Activated naive CD4-positive, alpha-beta T cell treated with anti-CD3 and anti-CD28 coated beads for 36 hours (primary cell): ENCODE measurements at regions of chr13 and their contacts with region 1.

Region 1: GRCh38 chr13:41916173-41916954 is 44.5 kb downstream of the VWA8 start:
- DNase-seq: no peak
- H3K4me3 Mint-ChIP-seq: peak overlapping the region; percentile 59
- H3K27ac Mint-ChIP-seq: peak overlapping the region; percentile 95
- H3K4me1 Mint-ChIP-seq: peaks cover 60% of the 10 kb centered on the region
- H3K27me3 Mint-ChIP-seq: no peaks in the 10 kb centered on the region

Region 2: DNA sequence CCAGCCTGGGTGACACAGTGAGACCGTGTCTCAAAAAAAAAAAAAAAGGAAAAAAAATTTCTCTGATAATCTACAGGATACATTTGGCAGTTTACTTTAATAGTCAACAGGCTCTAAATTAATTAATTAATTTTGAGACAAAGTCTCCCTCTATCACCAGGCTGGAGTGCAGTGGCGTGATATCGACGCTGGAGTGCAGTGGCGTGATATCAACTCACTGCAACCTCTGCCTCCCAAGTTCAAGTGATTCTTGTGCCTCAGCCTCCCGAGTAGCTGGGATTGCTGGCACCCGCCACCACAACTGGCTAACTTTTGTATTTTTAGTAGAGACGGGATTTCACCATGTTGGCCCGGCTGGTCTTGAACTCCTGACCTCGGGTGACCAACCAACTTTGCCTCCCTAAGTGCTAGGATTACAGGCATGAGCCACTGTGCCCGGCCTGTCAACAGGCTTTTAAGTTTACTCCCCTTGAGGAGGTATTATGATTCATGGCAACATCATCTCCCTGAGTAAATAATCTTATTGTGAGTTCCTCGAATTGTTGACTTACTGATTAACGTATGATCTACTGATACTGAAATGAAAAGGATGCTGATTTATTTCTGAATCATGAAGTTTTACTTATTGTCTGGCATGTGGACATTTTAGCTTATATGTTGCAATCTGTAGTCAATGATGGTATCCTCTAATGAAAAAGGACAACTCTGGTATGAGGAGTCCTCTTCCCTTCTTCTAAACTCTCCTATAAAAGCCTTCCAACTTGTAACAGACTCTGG is 631.7 kb before region 1 on chr13:
- CTCF ChIA-PET with region 1: no interaction called
- intact Hi-C with region 1: no loop called
- DNase-seq: no peak
- H3K4me3 Mint-ChIP-seq: no peak overlapping the region
- H3K27ac Mint-ChIP-seq: no peak overlapping the region
- H3K4me1 Mint-ChIP-seq: peaks cover 33% of the 10 kb centered on the region
- H3K27me3 Mint-ChIP-seq: no peaks in the 10 kb centered on the region

Region 3: DNA sequence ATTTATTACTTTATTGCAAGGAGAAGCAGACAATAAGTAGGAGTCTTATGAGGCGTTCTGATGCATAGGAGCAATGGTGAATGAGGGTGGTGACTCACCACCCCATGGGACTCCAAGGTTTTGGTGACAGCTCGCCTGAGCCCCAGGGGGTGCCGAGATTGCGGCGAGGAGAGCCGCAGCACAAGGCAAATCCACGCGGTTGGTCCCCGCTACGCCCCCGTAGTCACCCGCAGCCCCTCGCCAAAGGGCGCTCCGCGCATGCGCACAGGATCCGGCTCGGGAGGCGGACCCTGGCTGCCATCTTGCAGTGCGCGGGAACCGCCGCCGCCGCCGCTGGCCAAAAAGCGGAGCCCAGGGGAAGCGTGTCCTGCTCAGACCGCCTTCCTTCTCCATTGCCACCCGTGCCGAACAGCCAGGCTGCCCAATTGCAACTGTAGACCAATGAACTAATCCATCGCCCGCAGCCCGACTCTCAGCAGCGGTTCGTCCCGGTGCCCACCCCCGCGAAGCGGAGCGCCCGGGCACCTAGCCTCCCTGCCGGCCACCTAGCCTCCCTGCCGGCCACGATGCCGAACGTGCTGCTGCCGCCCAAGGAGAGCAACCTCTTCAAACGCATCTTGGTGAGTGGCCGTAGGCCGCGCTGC is 605.3 kb before region 1 on chr13 and contains the start of gene NAA16:
- CTCF ChIA-PET with region 1: no interaction called
- intact Hi-C with region 1: loop called (anchors 5 kb)
- DNase-seq: peak; percentile 96
- H3K4me3 Mint-ChIP-seq: peak within 1 kb of the TSS; percentile 94
- H3K27ac Mint-ChIP-seq: peak within 1 kb of the TSS; percentile 95
- H3K4me1 Mint-ChIP-seq: peaks cover 31% of the 10 kb centered on the region
- H3K27me3 Mint-ChIP-seq: no peaks in the 10 kb centered on the region
- total RNA-seq, gene NAA16: 29.6 to 31.5 TPM

Region 4: DNA sequence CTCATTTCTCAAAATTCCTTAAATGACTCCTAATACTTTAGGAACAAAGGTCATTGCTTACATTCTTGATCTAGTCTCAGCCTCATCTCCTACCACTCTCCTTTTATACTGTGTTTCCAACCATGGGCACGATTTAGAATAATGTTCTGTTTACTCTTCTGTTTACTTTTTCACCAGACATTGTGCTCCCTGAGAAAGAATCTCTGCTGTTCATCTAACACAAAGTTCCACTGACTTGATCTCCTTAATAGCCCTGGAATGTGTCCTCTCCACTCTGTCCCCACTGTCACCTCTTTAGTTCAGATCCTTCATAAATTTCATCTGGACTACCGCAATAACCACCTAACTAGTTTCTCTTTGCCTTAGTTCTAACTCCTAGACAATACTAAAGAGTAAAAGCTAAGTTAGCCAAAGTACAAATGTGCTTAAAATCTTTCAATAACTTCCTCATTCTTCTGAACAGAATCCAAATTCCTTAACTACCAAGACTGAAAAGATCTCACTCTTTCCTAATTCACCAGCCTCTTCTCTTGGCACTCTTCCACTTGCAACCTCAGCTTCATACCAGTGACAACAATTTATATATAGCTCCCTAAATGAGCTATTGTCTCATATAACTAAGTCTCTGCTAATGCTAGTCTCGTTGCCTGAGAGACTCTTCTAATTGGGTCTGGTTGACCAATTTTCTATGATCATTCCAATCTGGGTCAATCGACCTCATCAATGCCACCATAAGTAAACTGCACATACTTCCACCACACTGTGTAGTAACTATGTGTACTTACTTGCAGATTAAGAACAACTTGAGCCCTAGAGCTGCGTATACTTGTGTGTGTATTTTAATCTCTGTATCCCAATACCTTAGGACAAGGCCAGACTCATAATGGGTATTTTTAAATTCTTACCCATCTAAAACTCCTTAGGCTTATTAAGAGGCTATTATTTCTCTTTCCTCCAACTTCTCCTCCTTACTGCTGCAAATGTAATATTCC is 135.4 kb before region 1 on chr13:
- CTCF ChIA-PET with region 1: no interaction called
- intact Hi-C with region 1: no loop called
- DNase-seq: no peak
- H3K4me3 Mint-ChIP-seq: no peak overlapping the region
- H3K27ac Mint-ChIP-seq: no peak overlapping the region
- H3K4me1 Mint-ChIP-seq: no peaks in the 10 kb centered on the region
- H3K27me3 Mint-ChIP-seq: no peaks in the 10 kb centered on the region

Region 5: GRCh38 chr13:41802684-41803444 is 113.5 kb before region 1 on chr13:
- CTCF ChIA-PET with region 1: no interaction called
- intact Hi-C with region 1: loop called (anchors 2 kb)
- DNase-seq: peak; percentile 18
- H3K4me3 Mint-ChIP-seq: no peak overlapping the region
- H3K27ac Mint-ChIP-seq: peak overlapping the region; percentile 68
- H3K4me1 Mint-ChIP-seq: peaks cover 14% of the 10 kb centered on the region
- H3K27me3 Mint-ChIP-seq: no peaks in the 10 kb centered on the region

Region 6: DNA sequence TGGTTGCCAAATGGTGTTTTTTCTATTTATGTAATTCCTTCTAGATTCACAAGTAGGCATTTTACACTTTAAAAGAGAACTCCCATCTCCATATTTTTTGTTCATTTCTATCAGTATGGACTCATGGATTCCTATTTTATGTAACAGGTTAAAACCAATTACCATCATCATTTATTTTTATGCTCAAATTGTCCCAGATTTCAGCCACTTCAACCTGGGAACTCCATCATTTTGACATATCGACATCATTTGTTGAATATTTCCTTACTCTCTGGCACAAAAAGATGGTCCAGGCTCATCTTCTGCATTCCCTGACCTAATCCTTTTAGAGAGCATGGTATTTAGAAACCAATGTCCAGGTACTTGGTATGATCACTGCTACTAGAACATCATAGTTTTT is 35.4 kb before region 1 on chr13:
- CTCF ChIA-PET with region 1: no interaction called
- intact Hi-C with region 1: no loop called
- DNase-seq: no peak
- H3K4me3 Mint-ChIP-seq: no peak overlapping the region
- H3K27ac Mint-ChIP-seq: no peak overlapping the region
- H3K4me1 Mint-ChIP-seq: no peaks in the 10 kb centered on the region
- H3K27me3 Mint-ChIP-seq: no peaks in the 10 kb centered on the region

Region 7: GRCh38 chr13:42039946-42040729 is 123.8 kb after region 1 on chr13:
- CTCF ChIA-PET with region 1: no interaction called
- intact Hi-C with region 1: loop called (anchors 1 kb)
- DNase-seq: peak; percentile 86
- H3K4me3 Mint-ChIP-seq: peak overlapping the region; percentile 78
- H3K27ac Mint-ChIP-seq: peak overlapping the region; percentile 73
- H3K4me1 Mint-ChIP-seq: peaks cover 20% of the 10 kb centered on the region
- H3K27me3 Mint-ChIP-seq: no peaks in the 10 kb centered on the region

Region 8: GRCh38 chr13:42377640-42378382 is 461.4 kb after region 1 on chr13:
- CTCF ChIA-PET with region 1: no interaction called
- intact Hi-C with region 1: loop called (anchors 1 kb)
- DNase-seq: peak; percentile 71
- H3K4me3 Mint-ChIP-seq: no peak overlapping the region
- H3K27ac Mint-ChIP-seq: peak overlapping the region; percentile 95
- H3K4me1 Mint-ChIP-seq: peaks cover 59% of the 10 kb centered on the region
- H3K27me3 Mint-ChIP-seq: no peaks in the 10 kb centered on the region

Region 9: GRCh38 chr13:43797869-43798268 is 1881.5 kb after region 1 on chr13:
- CTCF ChIA-PET with region 1: no interaction called
- intact Hi-C with region 1: loop called (anchors 5 kb)
- DNase-seq: no peak
- H3K4me3 Mint-ChIP-seq: no peak overlapping the region
- H3K27ac Mint-ChIP-seq: no peak overlapping the region
- H3K4me1 Mint-ChIP-seq: peaks cover 30% of the 10 kb centered on the region
- H3K27me3 Mint-ChIP-seq: peaks cover 22% of the 10 kb centered on the region